ENCODE measurements at regions of chr4 and their contacts with region 1.

Region 1: GRCh38 chr4:52932591-52933470 is 70.7 kb downstream of the RASL11B start:
- DNase-seq: no peak
- H3K4me3 ChIP-seq: no peak overlapping the region
- H3K27ac ChIP-seq: no peak overlapping the region
- H3K4me1 ChIP-seq: no peaks in the 10 kb centered on the region
- H3K27me3 ChIP-seq: no peaks in the 10 kb centered on the region
- CTCF ChIP-seq: no peak
- POLR2A ChIP-seq: no peak

Region 2: DNA sequence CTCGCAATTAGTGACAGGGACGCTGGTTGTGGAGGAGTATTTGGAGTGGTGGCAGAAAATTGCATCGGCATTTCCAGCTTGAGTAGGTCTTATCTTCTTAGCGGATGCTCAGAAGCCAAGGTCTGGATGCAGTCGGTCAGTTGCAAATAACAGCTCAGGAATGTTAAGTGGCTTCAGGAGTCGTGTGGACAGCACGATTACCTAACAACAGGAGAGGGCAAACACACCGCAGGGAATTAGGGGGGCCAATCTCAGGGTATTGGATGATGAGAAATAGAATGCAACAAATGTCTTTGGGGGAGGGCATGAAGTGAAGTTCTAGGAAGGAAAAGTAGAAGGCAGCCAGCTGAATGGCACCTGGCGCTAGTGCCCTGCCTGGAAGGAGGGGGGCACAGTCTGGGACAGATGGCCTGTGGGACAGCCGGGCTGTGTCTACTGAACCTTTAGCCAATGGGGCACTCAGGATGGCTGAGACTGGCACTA is 58.9 kb before region 1 on chr4:
- intact Hi-C with region 1: loop called (anchors 10 kb)
- DNase-seq: no peak
- H3K4me3 ChIP-seq: no peak overlapping the region
- H3K27ac ChIP-seq: no peak overlapping the region
- H3K4me1 ChIP-seq: peaks cover 0 to 15% (median 0%) of the 10 kb centered on the region in 3 donors
- H3K27me3 ChIP-seq: no peaks in the 10 kb centered on the region
- CTCF ChIP-seq: no peak
- POLR2A ChIP-seq: no peak

Region 3: GRCh38 chr4:52894443-52894842 is 38.4 kb before region 1 on chr4:
- intact Hi-C with region 1: no loop called
- DNase-seq: no peak
- H3K4me3 ChIP-seq: no peak overlapping the region
- H3K27ac ChIP-seq: no peak overlapping the region
- H3K4me1 ChIP-seq: peaks cover 0 to 8% (median 0%) of the 10 kb centered on the region in 3 donors
- H3K27me3 ChIP-seq: no peaks in the 10 kb centered on the region
- CTCF ChIP-seq: no peak
- POLR2A ChIP-seq: no peak

Region 4: GRCh38 chr4:53208753-53209152 is 275.9 kb after region 1 on chr4:
- intact Hi-C with region 1: no loop called
- DNase-seq: no peak
- H3K4me3 ChIP-seq: no peak overlapping the region
- H3K27ac ChIP-seq: no peak overlapping the region
- H3K4me1 ChIP-seq: no peaks in the 10 kb centered on the region
- H3K27me3 ChIP-seq: no peaks in the 10 kb centered on the region
- CTCF ChIP-seq: no peak
- POLR2A ChIP-seq: no peak